ENCODE measurements at regions of chr11 and their contacts with region 1.

Region 1: GRCh38 chr11:72430741-72431570 is 3.4 kb downstream of the CLPB start:
- DNase-seq: peak; percentile 83
- H3K4me3 Mint-ChIP-seq: peak overlapping the region; percentile 46
- H3K27ac Mint-ChIP-seq: peak overlapping the region; percentile 73
- H3K4me1 Mint-ChIP-seq: peaks cover 35% of the 10 kb centered on the region
- H3K27me3 Mint-ChIP-seq: no peaks in the 10 kb centered on the region

Region 2: DNA sequence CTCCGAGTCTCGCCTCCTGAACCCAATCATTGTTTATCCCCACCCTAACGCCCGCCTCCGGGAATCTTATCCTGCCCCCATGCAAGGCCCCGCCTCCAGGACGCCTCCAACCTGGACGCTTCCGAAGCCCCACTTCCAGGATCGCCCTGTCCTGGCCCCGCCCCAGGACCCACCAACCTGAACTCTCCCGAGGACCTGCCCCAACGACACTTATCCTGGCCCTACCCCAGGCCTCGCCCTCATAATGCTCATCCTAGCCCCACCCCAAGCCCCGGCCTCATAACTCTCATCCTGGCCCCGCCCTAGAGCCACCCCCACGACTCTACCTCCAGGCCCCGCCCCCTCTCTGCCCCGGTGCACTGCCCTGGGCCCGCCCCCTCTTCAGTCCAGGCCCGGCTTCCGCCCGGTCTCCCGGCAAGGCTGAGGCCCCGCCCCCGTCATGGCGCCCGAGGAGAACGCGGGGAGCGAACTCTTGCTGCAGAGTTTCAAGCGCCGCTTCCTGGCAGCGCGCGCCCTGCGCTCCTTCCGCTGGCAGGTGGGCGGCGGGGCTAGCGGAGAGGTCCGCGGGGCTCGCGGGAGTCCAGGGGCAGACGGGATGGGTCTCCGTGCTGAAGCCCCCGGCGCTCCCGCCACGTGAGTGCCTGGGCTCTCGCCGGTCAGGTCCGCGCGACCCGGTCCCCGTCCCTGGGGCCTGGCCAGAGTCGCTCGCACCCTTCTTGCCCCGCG is 643.7 kb before region 1 on chr11:
- intact Hi-C with region 1: loop called (anchors 2 kb)
- DNase-seq: peak; percentile 98
- H3K4me3 Mint-ChIP-seq: peak overlapping the region; percentile 91
- H3K27ac Mint-ChIP-seq: peak overlapping the region; percentile 91
- H3K4me1 Mint-ChIP-seq: peaks cover 16% of the 10 kb centered on the region
- H3K27me3 Mint-ChIP-seq: no peaks in the 10 kb centered on the region

Region 3: DNA sequence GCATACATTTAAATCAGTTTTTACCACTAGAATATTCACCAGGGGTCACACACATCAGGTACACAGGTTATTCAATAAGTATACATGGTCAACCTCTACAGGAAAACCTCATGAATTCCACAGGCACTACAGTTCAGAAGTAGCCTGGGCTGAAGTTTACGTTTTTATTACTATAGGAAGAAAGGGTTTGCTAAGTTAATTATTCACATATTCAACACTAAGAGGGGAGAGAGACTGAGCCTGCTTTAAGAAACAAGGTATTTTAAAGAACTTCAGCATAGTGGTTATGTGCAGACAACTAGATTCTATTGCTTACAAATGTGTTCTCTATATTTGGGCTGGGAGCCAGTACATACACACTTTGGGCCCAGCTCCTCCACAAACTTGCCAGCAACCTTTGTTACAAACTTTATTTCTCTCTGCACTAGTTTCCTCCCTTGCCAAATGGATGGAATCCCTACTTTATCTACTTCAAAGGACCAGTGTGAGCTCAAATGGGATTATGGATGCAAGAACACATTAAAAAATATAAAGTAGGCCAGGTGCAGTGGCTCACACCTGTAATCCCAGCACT is 400.4 kb before region 1 on chr11:
- intact Hi-C with region 1: loop called (anchors 10 kb)
- DNase-seq: no peak
- H3K4me3 Mint-ChIP-seq: no peak overlapping the region
- H3K27ac Mint-ChIP-seq: no peak overlapping the region
- H3K4me1 Mint-ChIP-seq: peaks cover 19% of the 10 kb centered on the region
- H3K27me3 Mint-ChIP-seq: no peaks in the 10 kb centered on the region

Region 4: DNA sequence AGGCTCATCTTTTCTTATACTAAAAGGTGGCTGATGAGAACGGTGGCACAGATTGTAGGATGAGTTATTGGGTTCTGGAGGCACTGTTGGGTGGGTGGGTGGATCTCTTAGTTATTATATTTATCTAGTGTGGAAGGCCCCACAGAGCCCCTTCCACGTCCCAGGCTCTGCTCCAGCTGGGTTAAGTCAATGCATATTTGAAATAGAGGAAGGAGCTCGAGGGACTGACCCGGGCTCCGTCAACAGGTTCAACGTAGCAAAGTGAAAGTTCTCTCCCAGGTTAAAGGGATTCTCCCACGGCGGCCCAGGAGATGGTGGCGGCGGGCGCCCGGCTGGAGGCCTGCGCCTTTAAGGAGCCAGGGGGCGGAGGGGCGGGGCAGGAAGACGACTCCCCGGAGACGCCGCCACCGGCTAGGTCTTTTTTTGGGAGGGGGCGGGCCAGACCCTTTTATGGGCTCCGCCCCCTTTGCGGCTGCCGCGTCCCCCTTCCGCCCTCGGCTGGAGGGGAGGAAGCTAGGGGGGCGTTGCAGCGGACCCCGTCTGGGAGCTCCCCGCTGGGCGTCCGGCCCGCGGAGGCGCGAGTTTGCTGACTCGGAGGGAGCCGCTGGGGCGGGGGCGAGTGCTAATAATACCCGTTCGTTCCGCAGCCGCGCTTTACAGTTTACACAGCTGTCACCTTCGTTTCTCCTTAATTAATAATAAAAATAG is 207.9 kb before region 1 on chr11:
- intact Hi-C with region 1: loop called (anchors 1 kb)
- DNase-seq: peak; percentile 99
- H3K4me3 Mint-ChIP-seq: peak overlapping the region; percentile 98
- H3K27ac Mint-ChIP-seq: peak overlapping the region; percentile 87
- H3K4me1 Mint-ChIP-seq: peaks cover 20% of the 10 kb centered on the region
- H3K27me3 Mint-ChIP-seq: peaks cover 8% of the 10 kb centered on the region

Region 5: DNA sequence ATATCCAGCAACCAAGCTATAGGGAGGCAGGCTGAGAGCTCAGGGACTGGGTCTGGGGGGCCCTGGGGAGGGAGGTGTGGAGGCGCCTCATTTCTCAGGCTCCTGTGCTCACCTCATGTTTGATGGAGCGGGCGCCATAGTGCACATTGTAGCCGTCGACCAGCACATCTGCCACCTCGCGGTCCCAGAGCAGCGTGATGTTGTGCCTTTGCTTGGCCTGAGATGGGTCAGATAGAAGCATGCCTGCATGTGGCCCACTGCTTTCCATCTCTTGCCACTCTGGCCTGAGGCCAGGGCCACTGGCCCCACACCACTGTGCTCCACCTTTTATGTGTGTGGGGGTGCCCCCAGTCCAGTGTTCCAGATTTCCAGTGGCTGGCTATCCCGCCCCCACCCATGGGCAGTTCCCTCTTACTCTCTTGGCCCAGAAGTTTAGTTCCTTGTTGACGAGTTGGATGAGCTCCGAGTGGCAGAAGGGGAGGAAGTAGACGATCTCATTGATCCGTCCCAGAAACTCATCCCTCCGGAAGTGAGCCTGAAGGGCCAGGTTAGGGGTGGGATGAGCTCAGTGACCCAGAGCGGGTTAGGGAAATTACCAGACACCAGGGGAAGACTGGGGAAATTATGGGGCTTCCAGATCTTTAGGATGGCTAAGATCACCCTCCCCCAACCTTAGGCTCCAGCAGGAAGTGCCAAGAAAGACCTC is 136.9 kb before region 1 on chr11:
- intact Hi-C with region 1: loop called (anchors 2 kb)
- DNase-seq: no peak
- H3K4me3 Mint-ChIP-seq: no peak overlapping the region
- H3K27ac Mint-ChIP-seq: no peak overlapping the region
- H3K4me1 Mint-ChIP-seq: no peaks in the 10 kb centered on the region
- H3K27me3 Mint-ChIP-seq: no peaks in the 10 kb centered on the region

Region 6: GRCh38 chr11:72413914-72414628 is 16.9 kb before region 1 on chr11:
- intact Hi-C with region 1: loop called (anchors 2 kb)
- DNase-seq: peak; percentile 93
- H3K4me3 Mint-ChIP-seq: no peak overlapping the region
- H3K27ac Mint-ChIP-seq: no peak overlapping the region
- H3K4me1 Mint-ChIP-seq: peaks cover 29% of the 10 kb centered on the region
- H3K27me3 Mint-ChIP-seq: no peaks in the 10 kb centered on the region

Region 7: GRCh38 chr11:72471005-72471898 is 40.3 kb after region 1 on chr11:
- intact Hi-C with region 1: no loop called
- DNase-seq: peak; percentile 89
- H3K4me3 Mint-ChIP-seq: peak overlapping the region; percentile 22
- H3K27ac Mint-ChIP-seq: no peak overlapping the region
- H3K4me1 Mint-ChIP-seq: peaks cover 2% of the 10 kb centered on the region
- H3K27me3 Mint-ChIP-seq: peaks cover 55% of the 10 kb centered on the region